ENCODE measurements at regions of chr6 and their contacts with region 1.

Region 1: GRCh38 chr6:167898673-167899311 is 72.1 kb downstream of the AFDN start:
- DNase-seq: peak; percentile 67
- H3K4me3 ChIP-seq: no peak overlapping the region
- H3K27ac ChIP-seq: no peak overlapping the region
- H3K4me1 ChIP-seq: no peaks in the 10 kb centered on the region
- H3K27me3 ChIP-seq: no peaks in the 10 kb centered on the region

Region 2: DNA sequence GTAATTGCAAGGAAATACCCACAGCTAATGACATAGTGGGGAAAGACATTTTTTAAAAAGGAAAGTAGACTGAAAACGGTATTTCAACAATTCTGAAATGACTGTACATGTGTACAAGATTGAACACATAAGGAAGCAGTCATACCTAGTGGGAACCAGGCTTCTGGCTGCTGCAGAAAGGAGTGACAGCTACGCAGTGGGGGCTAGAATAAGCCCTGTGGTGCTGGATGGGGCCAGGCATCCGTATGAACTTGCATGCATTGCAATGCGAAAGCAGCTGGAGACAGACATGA is 686.1 kb before region 1 on chr6:
- in situ Hi-C with region 1: loop called (anchors 25 kb)
- DNase-seq: no peak
- H3K4me3 ChIP-seq: no peak overlapping the region
- H3K27ac ChIP-seq: no peak overlapping the region
- H3K4me1 ChIP-seq: no peaks in the 10 kb centered on the region
- H3K27me3 ChIP-seq: no peaks in the 10 kb centered on the region

Region 3: DNA sequence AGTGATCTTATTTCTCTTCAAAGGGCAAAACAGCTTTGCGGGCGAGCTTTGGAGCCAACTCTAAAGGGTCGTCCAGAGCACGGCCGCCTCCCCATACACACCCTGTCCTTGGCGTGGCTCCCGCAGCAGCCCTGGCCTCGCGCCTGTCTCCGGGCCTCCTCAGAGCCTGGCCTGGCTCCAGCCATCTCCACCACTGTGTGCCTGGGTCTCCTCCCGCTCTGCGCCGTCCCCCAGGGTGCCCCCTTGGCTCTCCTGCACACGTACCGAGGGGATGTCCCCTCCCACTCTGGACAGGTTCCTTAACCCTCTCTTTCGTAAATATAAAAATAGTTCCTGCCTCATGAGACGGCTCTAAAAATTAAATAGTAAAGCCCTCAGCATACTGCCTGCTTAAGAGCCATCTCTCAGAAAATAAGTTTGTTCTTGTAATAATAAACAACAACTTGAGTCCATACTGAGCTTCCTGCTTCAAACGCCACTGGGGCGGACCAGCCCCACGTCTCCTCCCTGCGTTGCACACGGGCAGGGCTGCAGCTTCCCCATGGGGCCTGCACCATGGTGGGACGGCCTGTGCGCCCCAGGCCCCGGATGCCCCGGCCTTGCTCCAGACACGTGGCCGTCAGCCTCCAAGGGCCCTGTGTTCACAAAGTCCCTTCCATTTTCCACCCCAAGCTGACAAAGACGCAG is 347.7 kb before region 1 on chr6:
- in situ Hi-C with region 1: no loop called
- DNase-seq: no peak
- H3K4me3 ChIP-seq: no peak overlapping the region
- H3K27ac ChIP-seq: no peak overlapping the region
- H3K4me1 ChIP-seq: no peaks in the 10 kb centered on the region
- H3K27me3 ChIP-seq: no peaks in the 10 kb centered on the region

Region 4: GRCh38 chr6:168248148-168248620 is 349.4 kb after region 1 on chr6:
- in situ Hi-C with region 1: no loop called
- DNase-seq: no peak
- H3K4me3 ChIP-seq: no peak overlapping the region
- H3K27ac ChIP-seq: no peak overlapping the region
- H3K4me1 ChIP-seq: no peaks in the 10 kb centered on the region
- H3K27me3 ChIP-seq: peaks cover 6% of the 10 kb centered on the region; the same call in 1 of the 2 replicates